ENCODE measurements at regions of chr16 and their contacts with region 1.

Region 1: DNA sequence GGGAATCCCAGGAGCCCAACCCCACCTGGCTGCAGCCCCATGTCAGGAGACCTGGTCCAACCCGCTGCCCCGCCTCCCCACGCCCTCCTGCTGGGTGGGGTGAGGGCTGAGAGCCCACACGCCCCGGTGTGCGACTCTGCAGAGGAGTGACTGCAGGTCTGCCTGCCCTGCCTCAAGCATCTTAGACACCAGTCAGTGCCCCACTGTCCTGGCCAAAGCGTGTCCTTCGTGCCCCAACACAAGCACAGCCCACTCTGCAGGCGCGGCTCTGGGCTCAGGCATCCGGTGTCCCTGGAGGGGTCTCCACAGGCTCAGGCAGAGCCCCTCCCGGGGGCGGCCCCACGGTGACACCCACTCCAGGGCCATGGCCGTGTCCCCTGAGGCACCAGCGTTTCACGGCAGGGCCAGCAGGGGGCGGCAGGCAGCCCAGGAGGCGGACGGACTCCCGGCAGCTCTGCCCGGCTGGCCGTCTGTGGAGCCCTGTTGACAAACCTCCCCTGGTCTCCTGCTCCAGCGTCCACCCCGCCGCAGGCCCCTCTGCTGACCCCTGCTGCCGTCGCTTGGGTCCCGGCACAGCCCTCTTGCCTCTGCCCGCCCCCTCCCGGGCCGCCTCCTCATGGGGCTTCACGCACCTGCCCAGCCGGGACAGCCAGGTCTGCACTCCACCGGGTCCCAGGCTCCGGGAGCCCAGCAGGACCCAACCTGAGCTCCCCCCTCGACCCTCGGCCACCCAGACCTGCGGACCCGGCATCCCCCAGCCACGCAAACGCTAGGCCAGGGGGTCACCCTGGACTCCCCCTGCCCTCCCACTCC is 8.6 kb upstream of the UBE2I start:
- DNase-seq: no peak
- H3K4me3 ChIP-seq: no peak overlapping the region
- CTCF ChIP-seq: peak; percentile 93

Region 2: GRCh38 chr16:1290063-1290501 is 10.8 kb before region 1 on chr16:
- CTCF ChIA-PET with region 1: interaction called, 10 read pairs
- POLR2A ChIA-PET with region 1: no interaction called
- DNase-seq: no peak
- H3K4me3 ChIP-seq: no peak overlapping the region
- CTCF ChIP-seq: no peak

Region 3: GRCh38 chr16:1323296-1324195 is 22.7 kb after region 1 on chr16:
- CTCF ChIA-PET with region 1: no interaction called
- POLR2A ChIA-PET with region 1: no interaction called
- DNase-seq: no peak
- H3K4me3 ChIP-seq: no peak overlapping the region
- CTCF ChIP-seq: no peak

Region 4: DNA sequence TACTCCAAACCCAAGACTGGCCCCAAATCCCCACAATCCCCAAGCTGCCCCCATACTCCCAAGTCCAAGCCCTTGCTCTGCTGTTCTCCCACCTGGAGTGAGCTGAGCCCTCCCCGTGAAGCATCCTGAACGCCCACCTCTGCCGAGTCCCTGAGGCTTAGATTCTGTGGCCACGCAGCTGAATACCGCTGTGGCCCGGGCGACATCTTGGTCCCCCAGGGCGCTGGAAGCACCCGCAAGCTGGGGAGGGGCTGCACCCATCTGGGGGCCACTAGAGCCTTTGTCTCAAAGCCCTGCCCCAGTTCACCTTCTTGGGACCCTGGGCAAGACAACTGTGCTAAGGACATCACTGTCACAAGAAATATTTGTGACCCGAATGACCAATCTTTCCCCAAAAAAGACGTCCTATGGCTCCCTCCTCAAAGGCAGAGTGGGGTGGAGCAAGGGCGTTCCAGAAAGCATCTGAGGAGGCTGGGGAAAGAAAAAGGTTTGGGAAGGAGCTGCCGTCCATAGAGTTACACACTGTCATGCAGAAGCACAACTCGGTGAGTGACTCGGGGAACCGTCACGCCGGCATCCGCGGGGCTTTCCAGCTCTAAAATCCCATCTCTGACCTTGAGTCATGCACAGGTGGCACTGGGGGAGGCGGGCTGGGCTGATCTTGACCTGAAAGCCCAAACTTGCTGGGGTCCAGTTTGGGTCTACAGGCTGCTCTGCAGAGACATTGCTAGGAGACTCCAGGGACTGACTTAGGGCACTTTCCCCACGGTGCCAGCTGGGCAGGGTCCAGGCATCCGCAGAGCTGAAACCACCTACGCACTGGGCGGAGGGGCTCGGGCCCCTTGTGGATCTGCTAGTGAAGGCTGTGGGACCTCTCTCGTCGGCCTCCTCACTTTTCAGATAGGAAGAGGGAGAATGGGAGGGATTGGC is 181.3 kb after region 1 on chr16:
- CTCF ChIA-PET with region 1: no interaction called
- POLR2A ChIA-PET with region 1: no interaction called
- DNase-seq: no peak
- H3K4me3 ChIP-seq: no peak overlapping the region
- CTCF ChIP-seq: no peak